ENCODE measurements at regions of chr2 and their contacts with region 1.

Region 1: GRCh38 chr2:148813603-148814065 is 61.4 kb upstream of the KIF5C start:
- DNase-seq: peak; percentile 41
- H3K4me3 Mint-ChIP-seq: no peak overlapping the region
- H3K27ac Mint-ChIP-seq: peak overlapping the region; percentile 8
- H3K4me1 Mint-ChIP-seq: peaks cover 20% of the 10 kb centered on the region
- H3K27me3 Mint-ChIP-seq: peaks cover 16% of the 10 kb centered on the region

Region 2: DNA sequence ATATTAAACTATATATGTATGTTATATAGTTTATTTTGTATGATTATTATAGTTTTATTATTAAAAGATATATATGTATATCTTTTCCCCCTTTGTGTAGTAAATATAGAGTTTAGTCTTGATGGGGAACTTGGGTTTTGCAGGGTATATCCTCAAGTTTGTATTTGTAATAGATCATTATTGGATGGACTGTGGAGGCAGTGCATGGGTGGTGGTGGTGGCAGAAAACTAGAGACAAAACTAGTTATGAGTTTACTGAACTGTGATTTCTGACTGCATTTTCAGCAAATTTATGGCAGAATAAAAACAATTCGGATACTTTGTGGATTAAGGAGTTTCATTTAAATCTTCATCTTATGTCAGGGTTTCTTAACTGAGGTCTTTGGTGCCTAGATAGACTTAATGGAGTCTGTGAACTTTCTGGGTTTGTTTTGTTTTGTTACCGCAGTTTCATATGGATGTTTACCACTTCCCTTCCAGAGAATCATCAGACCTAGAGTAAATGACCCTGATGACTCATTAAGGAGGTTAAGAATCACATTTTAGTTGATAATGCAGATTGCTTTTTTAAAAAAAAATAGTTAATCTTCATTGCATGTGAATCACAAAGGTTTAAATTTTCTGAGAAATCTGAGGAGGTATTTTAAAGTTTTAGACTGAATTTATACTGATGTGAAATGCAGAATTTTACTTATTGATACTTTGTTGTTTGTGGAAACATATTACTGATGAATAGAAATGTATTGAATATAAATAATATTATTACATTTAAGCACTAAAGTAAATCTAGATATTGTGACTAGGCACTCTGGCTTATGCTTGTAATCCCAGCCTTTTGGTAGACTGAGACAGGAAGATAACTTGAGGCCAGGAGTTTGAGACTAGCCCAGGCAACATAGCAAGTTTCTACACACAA is 154.6 kb before region 1 on chr2:
- intact Hi-C with region 1: loop called (anchors 1 kb)
- DNase-seq: no peak
- H3K4me3 Mint-ChIP-seq: peak overlapping the region; percentile 40
- H3K27ac Mint-ChIP-seq: peak overlapping the region; percentile 70
- H3K4me1 Mint-ChIP-seq: peaks cover 60% of the 10 kb centered on the region
- H3K27me3 Mint-ChIP-seq: no peaks in the 10 kb centered on the region